H1 (cell line): ENCODE measurements at regions of chr7 and their contacts with region 1.

Region 1: GRCh38 chr7:2471396-2471795 is 4.8 kb downstream of the GRIFIN start:
- DNase-seq: no peak
- H3K4me3 ChIP-seq: no peak overlapping the region
- H3K27ac ChIP-seq: no peak overlapping the region
- H3K4me1 ChIP-seq: peaks cover 0 to 21% (median 17%) of the 10 kb centered on the region in 4 experiments; a peak in 6 of 7 replicates
- H3K27me3 ChIP-seq: no peaks in the 10 kb centered on the region; a peak in 2 of 7 replicates
- CTCF ChIP-seq: no peak
- EP300 ChIP-seq: no peak
- POLR2A ChIP-seq: no peak
- RAD21 ChIP-seq: no peak

Region 2: DNA sequence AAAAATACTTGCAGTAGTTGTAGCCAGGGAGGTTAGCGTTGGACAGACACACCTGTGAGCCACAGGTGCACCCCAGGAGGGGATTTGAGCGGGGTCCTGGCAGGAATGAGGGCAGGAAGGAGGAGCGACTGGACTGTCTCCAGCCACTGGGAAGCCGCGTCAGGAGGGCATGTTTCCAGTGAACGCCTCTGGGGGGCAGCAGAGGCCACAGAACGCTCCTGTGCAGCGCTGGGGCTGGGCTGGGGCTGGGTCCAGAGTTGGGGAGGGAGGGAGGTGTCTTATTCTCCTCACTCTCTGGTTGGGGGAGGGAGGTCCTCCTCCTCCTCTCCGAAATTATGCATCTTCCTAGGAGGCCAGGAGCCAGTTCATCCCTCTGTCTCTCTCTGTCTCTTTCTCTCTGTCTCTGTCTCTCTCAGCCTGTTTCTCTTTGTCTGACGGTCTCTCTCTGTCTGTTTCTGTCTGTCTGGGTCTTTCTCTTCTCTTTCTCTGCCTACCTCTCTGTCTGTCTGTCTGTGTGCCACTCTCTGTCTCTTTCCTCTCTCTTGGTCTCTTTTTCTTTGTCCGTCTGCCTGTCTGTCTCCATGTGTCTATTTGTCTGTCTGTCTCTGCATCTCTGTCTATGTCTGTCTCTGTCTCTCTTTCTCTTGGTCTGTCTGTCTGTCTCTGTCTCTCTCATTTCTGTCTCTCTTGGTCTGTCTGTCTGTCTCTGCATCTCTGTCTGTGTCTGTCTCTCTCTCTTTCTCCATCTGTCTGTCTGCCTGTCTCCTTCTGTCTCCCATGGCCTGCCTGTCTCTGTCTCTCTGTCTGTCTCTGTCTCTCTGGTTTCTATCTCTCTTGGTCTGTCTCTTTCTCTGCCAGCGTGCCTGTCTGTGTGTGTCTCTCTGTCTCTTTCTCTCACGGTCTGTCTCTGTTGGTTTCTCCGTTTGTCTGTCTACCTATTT is 891.6 kb before region 1 on chr7:
- CTCF ChIA-PET with region 1: no interaction called
- POLR2A ChIA-PET with region 1: no interaction called
- DNase-seq: peak; percentile 74 to 96
- H3K4me3 ChIP-seq: 0 out of 8 replicates have a peak overlapping the region, but pooled peaks of 1 of the 4 experiments have one; percentile 6
- H3K27ac ChIP-seq: no peak overlapping the region
- H3K4me1 ChIP-seq: peaks cover 12 to 20% (median 13%) of the 10 kb centered on the region in 4 experiments
- H3K27me3 ChIP-seq: no peaks in the 10 kb centered on the region
- CTCF ChIP-seq: peak; percentile 87 to 94 (median 89)
- EP300 ChIP-seq: no peak
- POLR2A ChIP-seq: no peak
- RAD21 ChIP-seq: peak; percentile 97

Region 3: GRCh38 chr7:2129323-2130095 is 341.9 kb before region 1 on chr7:
- CTCF ChIA-PET with region 1: no interaction called
- POLR2A ChIA-PET with region 1: no interaction called
- DNase-seq: no peak
- H3K4me3 ChIP-seq: no peak overlapping the region
- H3K27ac ChIP-seq: no peak overlapping the region
- H3K4me1 ChIP-seq: no peaks in the 10 kb centered on the region
- H3K27me3 ChIP-seq: no peaks in the 10 kb centered on the region
- CTCF ChIP-seq: no peak
- EP300 ChIP-seq: no peak
- POLR2A ChIP-seq: no peak
- RAD21 ChIP-seq: no peak

Region 4: GRCh38 chr7:2224934-2225333 is 246.5 kb before region 1 on chr7:
- CTCF ChIA-PET with region 1: no interaction called
- POLR2A ChIA-PET with region 1: no interaction called
- DNase-seq: no peak
- H3K4me3 ChIP-seq: no peak overlapping the region
- H3K27ac ChIP-seq: no peak overlapping the region
- H3K4me1 ChIP-seq: no peaks in the 10 kb centered on the region; a peak in 1 of 7 replicates
- H3K27me3 ChIP-seq: no peaks in the 10 kb centered on the region
- CTCF ChIP-seq: no peak
- EP300 ChIP-seq: no peak
- POLR2A ChIP-seq: no peak
- RAD21 ChIP-seq: no peak

Region 5: GRCh38 chr7:2411815-2412586 is 59.4 kb before region 1 on chr7:
- CTCF ChIA-PET with region 1: interaction called, 12 read pairs
- POLR2A ChIA-PET with region 1: no interaction called
- DNase-seq: no peak
- H3K4me3 ChIP-seq: no peak overlapping the region
- H3K27ac ChIP-seq: no peak overlapping the region
- H3K4me1 ChIP-seq: peaks cover 0 to 2% (median 0%) of the 10 kb centered on the region in 4 experiments; a peak in 2 of 7 replicates
- H3K27me3 ChIP-seq: no peaks in the 10 kb centered on the region
- CTCF ChIP-seq: no peak
- EP300 ChIP-seq: no peak
- POLR2A ChIP-seq: no peak
- RAD21 ChIP-seq: no peak

Region 6: GRCh38 chr7:2482725-2483451 is 11.5 kb after region 1 on chr7:
- CTCF ChIA-PET with region 1: interaction called, 24 read pairs
- POLR2A ChIA-PET with region 1: interaction called, 6 read pairs
- DNase-seq: no peak
- H3K4me3 ChIP-seq: no peak overlapping the region
- H3K27ac ChIP-seq: no peak overlapping the region
- H3K4me1 ChIP-seq: peaks cover 0 to 6% (median 2%) of the 10 kb centered on the region in 4 experiments; a peak in 4 of 7 replicates
- H3K27me3 ChIP-seq: no peaks in the 10 kb centered on the region
- CTCF ChIP-seq: peak in 1 of 3 experiments; percentile 40; a peak in 1 of 4 replicates
- EP300 ChIP-seq: no peak
- POLR2A ChIP-seq: no peak
- RAD21 ChIP-seq: peak in 1 of 2 experiments; percentile 33; a peak in 1 of 4 replicates

Region 7: DNA sequence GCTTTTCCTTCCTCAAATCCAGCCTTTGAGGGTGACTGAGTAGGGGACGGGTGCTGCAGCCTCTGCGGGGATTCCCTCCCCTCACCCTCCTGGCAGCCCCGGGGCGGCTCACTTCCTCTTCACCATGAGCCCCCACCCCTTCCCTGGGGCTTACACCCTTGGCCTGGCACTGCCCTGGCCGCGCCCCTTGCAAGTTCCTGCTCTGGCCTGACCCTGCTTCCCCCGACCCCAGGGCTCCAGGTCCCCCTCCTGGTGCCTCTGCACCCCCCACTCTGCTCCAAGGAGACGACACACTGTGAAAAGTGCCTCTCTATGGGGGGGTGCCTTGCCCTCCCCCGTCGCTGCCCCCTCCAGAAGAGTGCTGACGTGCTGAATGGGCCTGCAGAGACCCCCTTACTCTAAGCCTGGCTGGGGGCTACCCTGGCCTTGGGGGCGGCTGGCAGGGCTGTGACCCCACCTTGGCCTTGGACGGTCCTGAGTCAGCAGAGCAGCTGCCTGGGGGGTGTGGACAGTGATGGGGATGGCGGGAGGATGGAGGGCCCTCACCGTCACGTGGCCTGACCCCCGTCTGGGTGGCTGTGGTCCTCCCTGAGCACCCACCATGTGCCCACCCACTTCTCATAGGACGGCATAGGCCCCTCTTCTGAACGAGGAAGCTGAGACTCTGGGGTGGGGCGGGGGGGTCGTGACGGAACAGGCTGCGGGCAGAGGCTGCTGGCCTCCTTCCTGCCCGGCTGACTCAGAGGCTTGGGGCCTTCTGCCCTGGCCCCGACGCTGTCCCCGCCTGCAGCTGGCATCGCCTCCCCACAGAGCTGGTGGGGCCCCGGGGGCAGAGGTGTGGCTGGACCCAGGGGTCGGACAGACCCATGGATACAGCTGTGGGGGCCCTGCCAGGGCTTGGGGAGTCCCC is 58.0 kb after region 1 on chr7:
- CTCF ChIA-PET with region 1: interaction called, 14 read pairs
- POLR2A ChIA-PET with region 1: interaction called, 5 read pairs
- DNase-seq: no peak
- H3K4me3 ChIP-seq: no peak overlapping the region
- H3K27ac ChIP-seq: no peak overlapping the region
- H3K4me1 ChIP-seq: peaks cover 0 to 36% (median 15%) of the 10 kb centered on the region in 4 experiments; a peak in 6 of 7 replicates
- H3K27me3 ChIP-seq: no peaks in the 10 kb centered on the region
- CTCF ChIP-seq: no peak
- EP300 ChIP-seq: no peak
- POLR2A ChIP-seq: no peak; a peak in 1 of 3 replicates
- RAD21 ChIP-seq: no peak

Region 8: DNA sequence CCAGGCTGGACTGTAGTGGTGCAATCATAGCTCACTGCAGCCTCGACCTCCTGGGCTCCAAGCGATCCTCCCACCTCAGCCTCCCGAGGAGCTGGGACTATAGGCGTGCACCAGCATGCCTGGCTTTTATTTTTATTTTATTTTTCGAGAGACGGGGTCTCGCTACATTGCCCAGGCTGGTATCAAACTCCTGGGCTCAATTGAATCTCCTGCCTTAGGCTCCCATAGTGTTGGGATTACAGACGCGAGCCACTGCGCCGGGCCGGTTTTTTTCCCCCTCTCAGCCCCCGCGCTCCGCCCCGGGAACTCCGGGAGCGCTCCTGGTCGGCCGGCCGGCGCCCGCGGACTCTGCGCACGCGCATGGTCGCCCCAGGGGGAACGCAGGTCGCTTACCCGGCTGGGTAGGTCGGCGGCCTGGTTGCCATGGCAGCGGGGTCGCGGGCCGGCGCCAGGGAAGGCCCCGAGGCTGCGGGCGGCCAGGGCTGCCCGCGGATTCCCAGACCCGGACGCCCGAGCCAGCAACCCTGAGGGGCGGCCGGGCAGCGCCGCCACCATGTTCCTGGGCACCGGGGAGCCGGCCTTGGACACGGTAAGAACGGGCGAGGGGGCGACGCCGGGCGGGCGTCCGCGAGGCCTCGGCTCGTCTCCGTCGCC is 87.4 kb after region 1 on chr7 and contains the start of gene IQCE:
- CTCF ChIA-PET with region 1: interaction called, 12 read pairs
- POLR2A ChIA-PET with region 1: interaction called, 3 read pairs
- DNase-seq: peak; percentile 64 to 98
- H3K4me3 ChIP-seq: peak within 1 kb of the TSS; percentile 46 to 86 (median 78)
- H3K27ac ChIP-seq: no peak within 1 kb of the TSS
- H3K4me1 ChIP-seq: peaks cover 3 to 14% (median 6%) of the 10 kb centered on the region in 4 experiments
- H3K27me3 ChIP-seq: no peaks in the 10 kb centered on the region
- CTCF ChIP-seq: no peak
- EP300 ChIP-seq: 0 out of 3 replicates have a peak, but pooled peaks of 1 of the 2 experiments have one; percentile 5
- POLR2A ChIP-seq: no peak
- RAD21 ChIP-seq: no peak
- total RNA-seq, gene IQCE: 4.9 and 5.7 TPM in 2 replicates

Region 9: GRCh38 chr7:2608921-2609411 is 137.6 kb after region 1 on chr7:
- CTCF ChIA-PET with region 1: interaction called, 14 read pairs
- POLR2A ChIA-PET with region 1: no interaction called
- DNase-seq: no peak
- H3K4me3 ChIP-seq: no peak overlapping the region
- H3K27ac ChIP-seq: no peak overlapping the region
- H3K4me1 ChIP-seq: peaks cover 0 to 17% (median 14%) of the 10 kb centered on the region in 4 experiments; a peak in 5 of 7 replicates
- H3K27me3 ChIP-seq: no peaks in the 10 kb centered on the region
- CTCF ChIP-seq: peak in 2 of 3 experiments; percentile 59 to 73; a peak in 3 of 4 replicates
- EP300 ChIP-seq: no peak
- POLR2A ChIP-seq: no peak
- RAD21 ChIP-seq: peak; percentile 50 to 66

Region 10: DNA sequence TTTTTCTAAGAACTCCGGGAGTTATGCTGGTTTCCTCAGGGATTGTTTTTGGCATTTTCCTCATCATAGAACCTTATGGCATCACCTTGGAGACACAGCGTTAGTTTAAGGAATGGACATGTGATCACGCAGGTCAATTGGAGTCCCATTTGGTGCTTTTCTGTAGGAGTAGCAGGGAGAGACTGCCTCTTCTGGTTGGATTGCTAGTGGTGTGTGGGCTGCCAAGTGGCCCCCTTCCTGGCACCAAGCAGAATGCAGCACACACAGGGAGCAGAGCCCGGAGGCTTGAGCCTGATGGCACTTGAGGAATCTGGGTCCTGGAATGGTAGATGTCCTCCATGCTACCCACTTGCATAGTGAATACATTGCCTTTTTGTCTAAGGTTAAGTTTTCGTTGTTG is 887.6 kb after region 1 on chr7:
- CTCF ChIA-PET with region 1: no interaction called
- POLR2A ChIA-PET with region 1: no interaction called
- DNase-seq: no peak
- H3K4me3 ChIP-seq: no peak overlapping the region
- H3K27ac ChIP-seq: no peak overlapping the region
- H3K4me1 ChIP-seq: peaks cover 0 to 2% (median 0%) of the 10 kb centered on the region in 4 experiments; a peak in 2 of 7 replicates
- H3K27me3 ChIP-seq: no peaks in the 10 kb centered on the region
- CTCF ChIP-seq: peak; percentile 18 to 76 (median 50)
- EP300 ChIP-seq: no peak
- POLR2A ChIP-seq: no peak
- RAD21 ChIP-seq: peak; percentile 25 to 46; a peak in 3 of 4 replicates